ENCODE measurements at regions of chr9 and their contacts with region 1.

Region 1: GRCh38 chr9:112097712-112098688 is 77.1 kb downstream of the SUSD1 start:
- DNase-seq: no peak
- ATAC-seq: peak; percentile 93
- H3K4me3 ChIP-seq: no peak overlapping the region
- H3K27ac ChIP-seq: no peak overlapping the region
- H3K4me1 ChIP-seq: peaks cover 5% of the 10 kb centered on the region; the same call in 1 of the 2 replicates
- H3K27me3 ChIP-seq: no peaks in the 10 kb centered on the region
- CTCF ChIP-seq: peak; percentile 86 to 93 (median 88)
- EP300 ChIP-seq: no peak
- POLR2A ChIP-seq: no peak
- RAD21 ChIP-seq: peak; percentile 91

Region 2: DNA sequence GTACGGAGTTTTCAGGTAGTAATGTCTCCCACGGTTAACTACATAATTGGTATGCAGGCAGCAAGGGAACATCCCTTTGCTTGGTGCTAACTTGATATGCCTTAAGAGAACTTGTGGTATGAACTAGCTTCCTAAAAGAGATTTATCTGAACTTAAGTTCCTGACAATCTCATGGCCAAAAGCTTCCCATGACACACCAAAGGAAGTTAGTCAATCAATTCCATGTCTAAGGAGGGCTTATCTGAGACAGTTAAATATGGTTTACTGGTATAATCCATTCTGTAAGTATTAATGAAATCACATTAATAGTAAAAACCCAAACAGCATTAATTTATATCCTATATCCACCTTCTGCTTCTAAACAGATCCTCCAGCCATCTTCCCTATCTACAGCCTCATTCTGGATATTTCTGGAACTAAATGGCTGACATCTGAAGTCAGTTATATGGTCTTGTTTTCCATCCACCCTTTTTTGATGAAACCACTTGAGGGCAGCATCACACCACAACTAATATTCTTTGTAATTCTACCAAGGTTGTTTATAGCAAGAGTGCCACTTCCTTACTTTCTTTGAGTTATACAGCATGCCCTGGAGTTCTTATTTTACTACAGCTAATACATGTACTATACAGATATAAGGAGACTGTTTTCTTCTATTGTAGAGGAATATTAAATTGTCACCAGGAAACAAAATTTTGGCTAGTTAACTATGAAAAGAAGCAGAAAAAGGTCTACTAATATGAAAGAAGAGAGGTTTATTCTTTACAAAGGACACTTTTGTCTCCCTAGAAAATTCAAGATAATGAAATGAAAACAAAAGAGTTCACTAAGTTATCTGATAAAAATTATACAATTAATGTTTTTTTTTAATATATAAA is 338.0 kb before region 1 on chr9:
- CTCF ChIA-PET with region 1: interaction called, 51 read pairs
- POLR2A ChIA-PET with region 1: no interaction called
- RAD21 ChIA-PET with region 1: interaction called, 9 read pairs
- SMC1A ChIA-PET with region 1: interaction called, 15 read pairs
- in situ Hi-C with region 1: no loop called
- intact Hi-C with region 1: no loop called
- DNase-seq: peak; percentile 79
- ATAC-seq: peak; percentile 97
- H3K4me3 ChIP-seq: no peak overlapping the region
- H3K27ac ChIP-seq: no peak overlapping the region
- H3K4me1 ChIP-seq: no peaks in the 10 kb centered on the region
- H3K27me3 ChIP-seq: no peaks in the 10 kb centered on the region
- CTCF ChIP-seq: peak; percentile 51 to 73 (median 56); a peak in 4 of 6 replicates
- EP300 ChIP-seq: no peak
- POLR2A ChIP-seq: no peak
- RAD21 ChIP-seq: peak; percentile 95

Region 3: DNA sequence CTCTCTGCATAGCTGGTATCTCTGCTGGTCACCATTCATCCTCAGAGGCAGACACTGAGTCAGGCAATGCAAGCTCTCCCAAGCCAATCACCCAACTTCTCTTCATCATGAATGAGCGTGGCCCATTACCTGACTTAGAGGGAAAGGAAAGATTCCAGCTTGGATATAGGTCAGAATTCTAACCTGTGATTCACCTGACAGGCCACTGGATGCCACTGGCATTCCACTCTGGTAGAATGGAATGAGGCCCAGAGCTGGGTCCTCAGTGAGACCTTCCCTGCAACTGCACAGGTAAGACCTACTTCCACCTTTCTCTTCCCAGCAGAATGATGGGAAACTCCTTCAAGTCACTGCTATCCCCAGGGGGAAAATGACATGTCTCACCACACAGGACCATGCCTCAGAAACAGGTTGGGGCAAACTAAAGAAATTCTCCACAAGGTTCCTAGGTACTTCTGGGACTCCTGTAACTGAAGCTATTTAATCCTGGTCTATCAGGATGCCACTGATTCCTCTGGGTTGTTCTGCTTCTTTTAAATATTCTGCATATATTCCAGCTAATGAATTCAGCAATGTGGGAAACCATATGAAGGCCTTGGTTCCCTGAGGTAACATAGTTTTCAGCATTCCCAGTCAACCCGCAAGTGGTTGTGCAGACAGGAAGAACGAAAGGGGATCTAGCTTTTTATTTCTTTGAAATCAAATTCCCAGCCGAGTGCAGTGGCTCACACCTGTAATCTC is 15.1 kb after region 1 on chr9:
- CTCF ChIA-PET with region 1: interaction called, 17 read pairs
- POLR2A ChIA-PET with region 1: no interaction called
- RAD21 ChIA-PET with region 1: interaction called, 4 read pairs
- SMC1A ChIA-PET with region 1: interaction called, 16 read pairs
- in situ Hi-C with region 1: no loop called
- intact Hi-C with region 1: no loop called
- DNase-seq: no peak
- ATAC-seq: peak; percentile 75
- H3K4me3 ChIP-seq: no peak overlapping the region
- H3K27ac ChIP-seq: no peak overlapping the region
- H3K4me1 ChIP-seq: no peaks in the 10 kb centered on the region
- H3K27me3 ChIP-seq: no peaks in the 10 kb centered on the region
- CTCF ChIP-seq: peak; percentile 56 to 74 (median 57); a peak in 5 of 6 replicates
- EP300 ChIP-seq: no peak
- POLR2A ChIP-seq: no peak
- RAD21 ChIP-seq: peak; percentile 88

Region 4: GRCh38 chr9:112283582-112284253 is 185.7 kb after region 1 on chr9:
- CTCF ChIA-PET with region 1: no interaction called
- POLR2A ChIA-PET with region 1: no interaction called
- RAD21 ChIA-PET with region 1: no interaction called
- SMC1A ChIA-PET with region 1: no interaction called
- in situ Hi-C with region 1: no loop called
- intact Hi-C with region 1: no loop called
- DNase-seq: no peak
- ATAC-seq: no peak
- H3K4me3 ChIP-seq: no peak overlapping the region
- H3K27ac ChIP-seq: no peak overlapping the region
- H3K4me1 ChIP-seq: no peaks in the 10 kb centered on the region
- H3K27me3 ChIP-seq: no peaks in the 10 kb centered on the region
- CTCF ChIP-seq: no peak
- EP300 ChIP-seq: no peak
- POLR2A ChIP-seq: no peak
- RAD21 ChIP-seq: no peak

Region 5: DNA sequence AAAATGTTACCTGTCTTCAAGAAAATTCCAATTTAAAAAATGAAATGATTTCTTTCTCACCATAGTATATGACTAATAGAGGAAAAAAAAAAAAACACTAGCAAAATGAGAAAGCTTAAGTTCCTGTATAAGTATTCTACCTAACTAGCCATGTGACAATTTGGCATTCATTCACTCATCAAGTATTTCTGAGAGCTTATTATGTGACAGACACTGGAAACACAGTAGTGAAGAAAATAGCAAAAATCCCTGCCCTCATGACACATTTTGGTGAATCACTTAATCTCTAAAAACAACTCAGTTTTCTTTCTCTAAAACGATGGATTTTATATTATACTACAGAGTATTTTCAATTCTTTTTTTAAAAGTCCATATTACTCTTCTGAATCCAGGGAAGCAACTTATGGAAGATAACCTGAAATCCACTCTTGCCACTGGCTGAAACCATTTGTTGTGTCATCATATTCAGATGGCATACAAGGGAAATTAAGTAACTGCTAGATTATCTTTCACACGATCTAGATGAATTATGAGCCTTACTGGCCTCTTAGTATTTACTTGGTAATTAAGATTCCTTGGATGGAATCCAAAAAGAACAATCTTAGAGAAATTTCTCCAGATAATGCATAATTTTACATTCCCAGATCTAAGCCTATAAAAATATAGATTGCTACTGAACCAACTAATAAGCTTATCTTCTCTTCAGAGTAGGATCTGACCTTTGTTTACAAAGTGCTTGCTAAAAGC is 229.9 kb after region 1 on chr9:
- CTCF ChIA-PET with region 1: interaction called, 7 read pairs
- POLR2A ChIA-PET with region 1: no interaction called
- RAD21 ChIA-PET with region 1: interaction called, 14 read pairs
- SMC1A ChIA-PET with region 1: interaction called, 11 read pairs
- in situ Hi-C with region 1: no loop called
- intact Hi-C with region 1: no loop called
- DNase-seq: no peak
- ATAC-seq: no peak
- H3K4me3 ChIP-seq: 0 out of 2 replicates have a peak overlapping the region, but pooled peaks have one; percentile 5
- H3K27ac ChIP-seq: 0 out of 2 replicates have a peak overlapping the region, but pooled peaks have one; percentile 20
- H3K4me1 ChIP-seq: peaks cover 23% of the 10 kb centered on the region
- H3K27me3 ChIP-seq: no peaks in the 10 kb centered on the region
- CTCF ChIP-seq: no peak
- EP300 ChIP-seq: no peak
- POLR2A ChIP-seq: no peak
- RAD21 ChIP-seq: no peak

Region 6: GRCh38 chr9:112361601-112362000 is 263.6 kb after region 1 on chr9:
- CTCF ChIA-PET with region 1: interaction called, 135 read pairs
- POLR2A ChIA-PET with region 1: no interaction called
- RAD21 ChIA-PET with region 1: interaction called, 27 read pairs
- SMC1A ChIA-PET with region 1: interaction called, 86 read pairs
- in situ Hi-C with region 1: no loop called
- intact Hi-C with region 1: loop called (anchors 1 kb)
- DNase-seq: no peak
- ATAC-seq: peak; percentile 71
- H3K4me3 ChIP-seq: no peak overlapping the region
- H3K27ac ChIP-seq: no peak overlapping the region
- H3K4me1 ChIP-seq: no peaks in the 10 kb centered on the region
- H3K27me3 ChIP-seq: no peaks in the 10 kb centered on the region
- CTCF ChIP-seq: peak in 2 of 3 experiments; percentile 30 to 55; a peak in 2 of 6 replicates
- EP300 ChIP-seq: no peak
- POLR2A ChIP-seq: no peak
- RAD21 ChIP-seq: peak; percentile 60

Region 7: GRCh38 chr9:112717661-112718341 is 619.8 kb after region 1 on chr9 and contains the start of gene INIP:
- CTCF ChIA-PET with region 1: interaction called, 6 read pairs
- POLR2A ChIA-PET with region 1: no interaction called
- RAD21 ChIA-PET with region 1: interaction called, 3 read pairs
- SMC1A ChIA-PET with region 1: no interaction called
- in situ Hi-C with region 1: no loop called
- intact Hi-C with region 1: loop called (anchors 10 kb)
- DNase-seq: peak; percentile 87
- ATAC-seq: peak; percentile 94
- H3K4me3 ChIP-seq: peak within 1 kb of the TSS; percentile 82
- H3K27ac ChIP-seq: peak within 1 kb of the TSS; percentile 69
- H3K4me1 ChIP-seq: peaks cover 17% of the 10 kb centered on the region
- H3K27me3 ChIP-seq: no peaks in the 10 kb centered on the region
- CTCF ChIP-seq: peak; percentile 26 to 54 (median 26); a peak in 4 of 6 replicates
- EP300 ChIP-seq: no peak
- POLR2A ChIP-seq: peak; percentile 93
- RAD21 ChIP-seq: peak; percentile 55
- polyA plus RNA-seq, gene INIP: 61.2 to 66.5 TPM

Measured in GM12878 (cell line).